K562 (cell line): ENCODE measurements at regions of chr6 and their contacts with region 1.

Region 1: GRCh38 chr6:157597446-157598312 is 216.7 kb downstream of the ZDHHC14 start:
- DNase-seq: peak in 2 of 4 experiments; percentile 63 to 67
- ATAC-seq: peak; percentile 94
- H3K4me3 ChIP-seq: no peak overlapping the region
- H3K27ac ChIP-seq: no peak overlapping the region
- H3K4me1 ChIP-seq: peaks cover 0 to 8% of the 10 kb centered on the region in 2 experiments; a peak in 2 of 5 replicates
- H3K27me3 ChIP-seq: no peaks in the 10 kb centered on the region
- CTCF ChIP-seq: peak; percentile 74 to 85 (median 78)
- EP300 ChIP-seq: no peak
- POLR2A ChIP-seq: no peak
- RAD21 ChIP-seq: peak; percentile 66 to 85

Region 2: DNA sequence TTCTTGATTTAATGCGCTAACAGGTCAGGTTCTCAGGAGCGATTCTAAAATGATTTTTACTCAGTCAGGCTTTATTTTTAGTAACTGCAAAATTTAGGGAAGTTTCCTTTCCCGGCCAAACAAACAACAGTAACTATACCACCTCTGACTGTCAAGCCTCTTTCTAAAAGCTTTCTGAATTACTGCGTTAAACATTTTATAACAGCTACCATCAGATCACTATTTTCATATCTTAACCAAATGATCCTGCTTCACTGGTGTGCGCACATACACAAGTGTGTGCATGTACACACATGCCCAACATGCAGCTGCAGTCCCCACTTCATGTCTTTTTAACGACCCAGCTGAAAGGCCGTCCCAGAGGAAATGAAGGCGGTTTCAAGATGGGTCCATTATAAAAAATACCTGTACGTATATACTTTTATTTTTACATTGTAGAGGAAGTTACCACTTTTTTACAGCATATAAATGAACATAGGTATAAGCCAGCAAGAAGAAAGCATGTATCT is 299.4 kb before region 1 on chr6:
- CTCF ChIA-PET with region 1: no interaction called
- POLR2A ChIA-PET with region 1: no interaction called
- in situ Hi-C with region 1: no loop called
- intact Hi-C with region 1: no loop called
- DNase-seq: no peak
- ATAC-seq: no peak
- H3K4me3 ChIP-seq: no peak overlapping the region
- H3K27ac ChIP-seq: no peak overlapping the region
- H3K4me1 ChIP-seq: peaks cover 0 to 4% of the 10 kb centered on the region in 2 experiments; a peak in 2 of 5 replicates
- H3K27me3 ChIP-seq: no peaks in the 10 kb centered on the region
- CTCF ChIP-seq: no peak
- EP300 ChIP-seq: no peak
- POLR2A ChIP-seq: no peak
- RAD21 ChIP-seq: no peak

Region 3: GRCh38 chr6:157461000-157461915 is 136.4 kb before region 1 on chr6:
- CTCF ChIA-PET with region 1: interaction called, 4 read pairs
- POLR2A ChIA-PET with region 1: no interaction called
- in situ Hi-C with region 1: no loop called
- intact Hi-C with region 1: loop called (anchors 5 kb)
- DNase-seq: peak; percentile 76 to 90 (median 82)
- ATAC-seq: peak; percentile 85
- H3K4me3 ChIP-seq: no peak overlapping the region
- H3K27ac ChIP-seq: peak overlapping the region; percentile 54; the same call in 2 of the 3 replicates
- H3K4me1 ChIP-seq: peaks cover 51 to 66% of the 10 kb centered on the region in 2 experiments
- H3K27me3 ChIP-seq: no peaks in the 10 kb centered on the region
- CTCF ChIP-seq: peak; percentile 84 to 98 (median 91)
- EP300 ChIP-seq: peak; percentile 52; the same call in 1 of the 2 replicates
- POLR2A ChIP-seq: no peak
- RAD21 ChIP-seq: peak; percentile 67 to 79

Region 4: GRCh38 chr6:157521362-157522335 is 76.0 kb before region 1 on chr6:
- CTCF ChIA-PET with region 1: no interaction called
- POLR2A ChIA-PET with region 1: interaction called, 3 read pairs
- in situ Hi-C with region 1: no loop called
- intact Hi-C with region 1: loop called (anchors 5 kb)
- DNase-seq: peak in 1 of 4 experiments; percentile 28
- ATAC-seq: peak; percentile 1; the same call in 2 of the 3 replicates
- H3K4me3 ChIP-seq: no peak overlapping the region
- H3K27ac ChIP-seq: peak overlapping the region; percentile 84
- H3K4me1 ChIP-seq: peaks cover 43 to 49% of the 10 kb centered on the region in 2 experiments
- H3K27me3 ChIP-seq: no peaks in the 10 kb centered on the region
- CTCF ChIP-seq: no peak
- EP300 ChIP-seq: no peak
- POLR2A ChIP-seq: no peak
- RAD21 ChIP-seq: no peak

Region 5: DNA sequence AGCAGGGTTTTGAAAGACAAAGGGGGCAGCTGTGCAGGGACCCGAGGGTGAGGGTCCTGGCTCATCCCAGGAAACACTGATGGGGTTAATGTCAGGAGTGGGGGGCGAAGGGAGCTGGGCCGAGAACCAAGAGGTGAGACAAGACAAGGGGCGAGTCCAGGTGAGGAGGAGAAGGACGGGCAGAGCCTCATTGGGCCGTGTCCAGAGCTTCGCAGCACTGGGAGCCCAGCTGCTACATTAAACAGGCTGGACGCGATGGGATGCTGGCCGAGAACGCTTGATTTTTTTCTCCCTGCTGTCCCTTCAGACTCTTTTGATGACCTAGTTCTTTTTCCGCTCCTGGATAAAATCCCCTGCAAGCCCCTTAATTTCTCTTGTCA is 52.6 kb after region 1 on chr6:
- CTCF ChIA-PET with region 1: no interaction called
- POLR2A ChIA-PET with region 1: no interaction called
- in situ Hi-C with region 1: no loop called
- intact Hi-C with region 1: no loop called
- DNase-seq: no peak
- ATAC-seq: no peak
- H3K4me3 ChIP-seq: no peak overlapping the region
- H3K27ac ChIP-seq: no peak overlapping the region
- H3K4me1 ChIP-seq: no peaks in the 10 kb centered on the region; a peak in 1 of 5 replicates
- H3K27me3 ChIP-seq: no peaks in the 10 kb centered on the region
- CTCF ChIP-seq: no peak
- EP300 ChIP-seq: no peak
- POLR2A ChIP-seq: no peak
- RAD21 ChIP-seq: no peak

Region 6: GRCh38 chr6:157715765-157716164 is 118.1 kb after region 1 on chr6:
- CTCF ChIA-PET with region 1: no interaction called
- POLR2A ChIA-PET with region 1: no interaction called
- in situ Hi-C with region 1: no loop called
- intact Hi-C with region 1: no loop called
- DNase-seq: no peak
- ATAC-seq: no peak
- H3K4me3 ChIP-seq: no peak overlapping the region
- H3K27ac ChIP-seq: no peak overlapping the region
- H3K4me1 ChIP-seq: peaks cover 4 to 6% of the 10 kb centered on the region in 2 experiments; a peak in 2 of 5 replicates
- H3K27me3 ChIP-seq: peaks cover 0 to 2% of the 10 kb centered on the region in 2 experiments; a peak in 2 of 5 replicates
- CTCF ChIP-seq: no peak
- EP300 ChIP-seq: no peak
- POLR2A ChIP-seq: no peak
- RAD21 ChIP-seq: no peak